K562 (cell line): ENCODE measurements at regions of chr16 and their contacts with region 1.

Region 1: DNA sequence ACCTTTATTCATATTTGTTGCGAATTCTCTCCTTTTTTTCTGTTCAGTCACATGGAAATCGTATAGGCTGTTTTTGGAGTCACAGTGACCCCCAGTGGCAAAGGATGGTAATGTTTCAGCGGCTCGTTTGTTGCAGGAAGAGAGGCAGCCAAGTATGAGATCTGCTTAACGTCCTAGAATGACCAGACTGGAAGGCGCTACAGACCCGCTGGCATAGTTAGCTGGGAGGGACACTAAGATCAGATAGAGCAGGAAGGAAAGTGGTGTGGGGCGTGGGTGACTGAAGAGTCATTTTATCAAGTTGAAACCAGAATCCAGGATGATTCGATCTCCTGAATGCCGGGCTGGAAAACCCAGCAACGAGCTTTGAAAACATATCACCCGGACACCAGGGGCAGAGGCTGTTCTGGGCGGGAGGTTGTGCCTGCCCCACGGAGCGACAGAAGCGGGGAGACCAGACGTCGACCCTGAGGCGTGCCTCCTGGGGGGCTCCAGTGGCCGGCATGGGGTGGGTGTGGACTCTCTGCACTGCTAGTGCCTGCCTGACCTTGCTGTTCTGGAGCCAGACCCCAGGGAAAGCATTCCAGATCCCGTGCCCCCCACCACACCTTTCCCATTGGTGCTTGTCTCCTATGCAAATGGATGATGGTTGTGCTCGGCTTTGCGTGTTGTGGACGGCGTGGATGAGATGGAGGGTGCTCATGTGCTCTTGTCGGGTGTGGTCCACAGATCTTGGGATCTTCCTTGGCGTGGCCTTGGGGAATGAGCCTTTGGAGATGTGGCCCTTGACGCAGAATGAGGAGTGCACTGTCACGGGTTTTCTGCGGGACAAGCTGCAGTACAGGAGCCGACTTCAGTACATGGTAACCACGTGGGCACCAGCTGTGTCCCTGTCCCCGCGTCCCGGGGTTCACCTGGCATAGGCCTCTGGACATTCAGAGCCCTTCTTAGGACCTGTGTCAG is 7.7 kb downstream of the IL34 start:
- DNase-seq: peak; percentile 75 to 91 (median 81)
- ATAC-seq: peak; percentile 93
- H3K4me3 ChIP-seq: peak overlapping the region; percentile 7
- H3K27ac ChIP-seq: peak overlapping the region; percentile 69; the same call in 2 of the 3 replicates
- H3K4me1 ChIP-seq: peaks cover 6 to 24% of the 10 kb centered on the region in 2 experiments
- H3K27me3 ChIP-seq: peaks cover 0 to 4% of the 10 kb centered on the region in 2 experiments; a peak in 1 of 5 replicates
- CTCF ChIP-seq: peak; percentile 82 to 97 (median 93)
- EP300 ChIP-seq: peak; percentile 36
- POLR2A ChIP-seq: no peak
- RAD21 ChIP-seq: peak; percentile 95 to 96

Region 2: DNA sequence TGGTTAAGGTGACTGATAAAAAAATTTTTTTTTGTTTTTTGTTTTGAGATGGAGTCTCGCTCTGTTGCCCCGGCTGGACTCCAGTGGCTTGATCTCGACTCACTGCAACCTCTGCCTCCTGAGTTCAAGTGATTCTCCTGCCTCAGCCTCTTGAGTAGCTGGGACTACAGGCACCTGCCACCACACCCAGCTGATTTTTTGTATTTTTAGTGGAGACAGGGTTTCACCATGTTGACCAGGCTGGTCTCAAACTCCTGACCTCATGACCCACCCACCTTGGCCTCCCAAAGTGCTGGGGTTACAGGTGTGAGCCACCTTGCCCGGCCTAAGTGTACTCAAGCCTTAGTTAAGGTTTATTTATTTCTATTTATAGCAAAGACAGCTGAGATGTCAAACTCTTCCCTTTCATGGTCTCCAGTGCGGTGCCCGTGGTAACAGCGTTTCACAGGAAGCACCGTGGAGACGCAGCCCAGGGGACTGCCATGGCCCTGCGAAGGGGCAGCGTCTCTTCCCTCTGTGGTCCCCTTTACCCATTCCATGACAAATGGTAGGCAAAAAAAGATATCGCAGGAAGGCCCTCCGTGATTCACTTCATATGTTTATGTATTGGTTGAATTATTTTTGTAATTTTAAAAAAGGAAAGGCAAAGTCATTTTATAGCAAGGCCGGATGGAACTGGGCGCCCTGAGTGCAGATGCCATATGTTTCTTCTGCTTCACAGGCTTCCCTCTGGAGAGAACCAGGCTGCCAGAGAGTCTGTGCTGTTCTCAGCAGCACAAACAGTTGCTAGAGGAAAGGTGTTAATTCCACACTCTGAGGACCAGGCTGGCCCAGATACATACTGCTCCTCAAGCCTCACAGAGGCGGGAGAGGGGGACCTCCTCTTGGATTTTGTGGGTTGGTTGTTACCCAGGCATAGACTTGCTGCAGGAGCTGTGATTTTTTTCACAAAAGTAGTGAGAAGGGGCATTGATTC is 278.2 kb before region 1 on chr16:
- CTCF ChIA-PET with region 1: no interaction called
- POLR2A ChIA-PET with region 1: no interaction called
- in situ Hi-C with region 1: no loop called
- intact Hi-C with region 1: loop called (anchors 5 kb)
- DNase-seq: no peak
- ATAC-seq: peak; percentile 7; the same call in 1 of the 3 replicates
- H3K4me3 ChIP-seq: no peak overlapping the region
- H3K27ac ChIP-seq: no peak overlapping the region
- H3K4me1 ChIP-seq: peaks cover 0 to 9% of the 10 kb centered on the region in 2 experiments; a peak in 2 of 5 replicates
- H3K27me3 ChIP-seq: no peaks in the 10 kb centered on the region
- CTCF ChIP-seq: no peak
- EP300 ChIP-seq: no peak
- POLR2A ChIP-seq: peak; percentile 82
- RAD21 ChIP-seq: no peak